ENCODE measurements at regions of chr14 and their contacts with region 1.

Region 1: DNA sequence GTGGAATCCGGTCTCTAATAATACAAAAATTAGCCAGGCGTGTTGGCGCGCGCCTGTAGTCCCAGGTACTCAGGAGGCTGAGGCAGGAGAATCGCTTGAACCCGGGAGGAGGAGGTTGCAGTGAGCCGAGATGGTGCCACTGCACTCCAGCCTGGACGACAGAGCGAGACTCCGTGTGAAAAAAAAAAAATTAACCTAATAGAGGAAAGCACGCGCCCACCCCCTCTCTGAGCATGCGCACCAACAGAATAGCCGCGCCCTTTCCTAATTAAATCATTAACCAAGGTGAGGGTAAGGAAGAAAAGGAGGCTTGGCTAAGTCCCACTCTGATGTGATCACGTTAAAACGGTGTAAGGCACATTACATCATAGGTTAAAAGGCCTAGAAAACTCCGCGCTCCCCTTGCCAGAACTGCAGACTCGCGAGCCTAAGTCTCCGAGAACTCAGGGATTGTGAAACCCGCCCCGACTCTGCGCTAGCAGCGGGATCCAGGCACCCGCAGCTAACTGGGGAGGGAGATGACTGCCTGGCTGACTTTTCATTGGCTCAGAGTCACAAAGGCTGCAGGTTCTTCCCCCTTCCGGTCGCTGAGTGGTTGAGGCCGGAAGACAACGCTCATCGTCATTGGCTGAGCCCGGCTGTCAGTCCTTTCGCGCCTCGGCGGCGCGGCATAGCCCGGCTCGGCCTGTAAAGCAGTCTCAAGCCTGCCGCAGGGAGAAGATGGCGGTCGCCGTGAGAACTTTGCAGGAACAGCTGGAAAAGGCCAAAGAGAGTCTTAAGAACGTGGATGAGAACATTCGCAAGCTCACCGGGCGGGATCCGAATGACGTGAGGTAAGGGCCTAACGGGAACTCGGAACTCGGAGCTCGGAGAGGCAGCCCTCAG is at the start of gene PNN:
- DNase-seq: peak; percentile 97 to 98 (median 98)
- ATAC-seq: peak; percentile 98
- H3K4me3 ChIP-seq: peak within 1 kb of the TSS; percentile 83
- H3K27ac ChIP-seq: peak within 1 kb of the TSS; percentile 98
- H3K4me1 ChIP-seq: peaks cover 2% of the 10 kb centered on the region
- H3K27me3 ChIP-seq: no peaks in the 10 kb centered on the region
- total RNA-seq, gene PNN: 25.2 to 32.5 (median 29.6) TPM

Region 2: GRCh38 chr14:39102969-39103957 is 71.5 kb before region 1 on chr14 and contains the start of gene SEC23A:
- intact Hi-C with region 1: loop called in 1 of 4 experiments (anchors 10 kb)
- DNase-seq: peak; percentile 95 to 97 (median 97)
- ATAC-seq: peak; percentile 99
- H3K4me3 ChIP-seq: peak within 1 kb of the TSS; percentile 77
- H3K27ac ChIP-seq: peak within 1 kb of the TSS; percentile 93
- H3K4me1 ChIP-seq: no peaks in the 10 kb centered on the region
- H3K27me3 ChIP-seq: no peaks in the 10 kb centered on the region
- total RNA-seq, gene SEC23A: 81.1 to 129 (median 96.0) TPM

Region 3: GRCh38 chr14:39266871-39267591 is 92.2 kb after region 1 on chr14:
- intact Hi-C with region 1: loop called in 3 of 4 experiments (anchors 10 kb)
- DNase-seq: peak; percentile 84 to 92 (median 92)
- ATAC-seq: peak; percentile 97 to 98
- H3K4me3 ChIP-seq: peak overlapping the region; percentile 86
- H3K27ac ChIP-seq: peak overlapping the region; percentile 90
- H3K4me1 ChIP-seq: peaks cover 2% of the 10 kb centered on the region
- H3K27me3 ChIP-seq: no peaks in the 10 kb centered on the region

Region 4: GRCh38 chr14:39432179-39432618 is 257.4 kb after region 1 on chr14 and contains the start of gene FBXO33:
- intact Hi-C with region 1: loop called in 2 of 4 experiments (anchors 5 to 10 kb)
- DNase-seq: peak; percentile 97 to 99 (median 99)
- ATAC-seq: peak; percentile 96 to 97
- H3K4me3 ChIP-seq: peak within 1 kb of the TSS; percentile 83
- H3K27ac ChIP-seq: peak within 1 kb of the TSS; percentile 100
- H3K4me1 ChIP-seq: peaks cover 2% of the 10 kb centered on the region
- H3K27me3 ChIP-seq: no peaks in the 10 kb centered on the region
- total RNA-seq, gene FBXO33: 5.3 to 6.7 (median 5.7) TPM